ENCODE measurements at regions of chr2 and their contacts with region 1.

Region 1: DNA sequence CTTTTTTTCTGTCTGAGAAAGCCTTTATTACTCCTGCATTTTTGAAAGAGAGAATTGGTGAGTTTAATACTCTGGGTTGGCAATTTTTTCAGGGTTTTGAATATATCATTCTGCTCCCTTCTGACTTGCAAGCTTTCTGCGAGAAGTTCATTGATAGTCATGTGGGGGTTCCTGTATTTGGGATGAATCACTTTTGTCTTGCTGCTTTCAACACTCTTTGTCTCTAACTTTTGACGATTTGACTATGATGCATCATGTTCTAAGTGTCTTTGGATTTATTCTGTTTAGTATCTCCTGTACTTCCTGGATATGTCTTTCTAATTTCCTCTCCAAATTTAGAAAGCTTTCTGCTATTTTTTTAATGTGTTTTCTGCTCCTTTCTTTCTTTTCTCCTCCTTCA is 41.0 kb upstream of the SLC9A2 start:
- DNase-seq: no peak
- ATAC-seq: no peak
- H3K4me3 Mint-ChIP-seq: no peak overlapping the region
- H3K27ac Mint-ChIP-seq: no peak overlapping the region
- H3K4me1 Mint-ChIP-seq: peaks cover 9% of the 10 kb centered on the region
- H3K27me3 Mint-ChIP-seq: peaks cover 19% of the 10 kb centered on the region

Region 2: GRCh38 chr2:102540641-102541281 is 37.6 kb before region 1 on chr2:
- CTCF ChIA-PET with region 1: no interaction called
- POLR2A ChIA-PET with region 1: no interaction called
- intact Hi-C with region 1: loop called in 1 of 2 experiments (anchors 5 kb)
- DNase-seq: no peak
- ATAC-seq: no peak
- H3K4me3 Mint-ChIP-seq: no peak overlapping the region
- H3K27ac Mint-ChIP-seq: no peak overlapping the region
- H3K4me1 Mint-ChIP-seq: no peaks in the 10 kb centered on the region
- H3K27me3 Mint-ChIP-seq: peaks cover 5% of the 10 kb centered on the region